PC-9 (cell line): ENCODE measurements at regions of chr1 and their contacts with region 1.

Region 1: DNA sequence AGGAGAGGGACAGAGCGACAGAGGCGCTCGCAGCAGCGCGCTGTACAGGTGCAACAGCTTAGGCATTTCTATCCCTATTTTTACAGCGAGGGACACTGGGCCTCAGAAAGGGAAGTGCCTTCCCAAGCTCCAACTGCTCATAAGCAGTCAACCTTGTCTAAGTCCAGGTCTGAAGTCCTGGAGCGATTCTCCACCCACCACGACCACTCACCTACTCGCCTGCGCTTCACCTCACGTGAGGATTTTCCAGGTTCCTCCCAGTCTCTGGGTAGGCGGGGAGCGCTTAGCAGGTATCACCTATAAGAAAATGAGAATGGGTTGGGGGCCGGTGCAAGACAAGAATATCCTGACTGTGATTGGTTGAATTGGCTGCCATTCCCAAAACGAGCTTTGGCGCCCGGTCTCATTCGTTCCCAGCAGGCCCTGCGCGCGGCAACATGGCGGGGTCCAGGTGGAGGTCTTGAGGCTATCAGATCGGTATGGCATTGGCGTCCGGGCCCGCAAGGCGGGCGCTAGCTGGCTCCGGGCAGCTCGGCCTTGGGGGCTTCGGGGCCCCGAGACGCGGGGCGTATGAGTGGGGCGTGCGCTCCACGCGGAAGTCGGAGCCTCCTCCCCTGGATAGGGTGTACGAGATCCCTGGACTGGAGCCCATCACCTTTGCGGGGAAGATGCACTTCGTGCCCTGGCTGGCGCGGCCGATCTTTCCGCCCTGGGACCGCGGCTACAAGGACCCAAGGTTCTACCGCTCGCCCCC is at the starts of genes CYB5RL and MRPL37:
- DNase-seq: peak; percentile 93 to 94
- H3K4me3 ChIP-seq: peak within 1 kb of the TSS; percentile 98
- H3K27ac ChIP-seq: no peak within 1 kb of the TSS
- H3K4me1 ChIP-seq: peaks cover 18% of the 10 kb centered on the region
- H3K27me3 ChIP-seq: no peaks in the 10 kb centered on the region
- CTCF ChIP-seq: no peak
- total RNA-seq, gene CYB5RL: 6.5 and 6.7 TPM in 2 replicates
- total RNA-seq, gene MRPL37: 180 and 198 TPM in 2 replicates

Region 2: GRCh38 chr1:53498555-53499142 is 701.3 kb before region 1 on chr1:
- CTCF ChIA-PET with region 1: no interaction called
- POLR2A ChIA-PET with region 1: no interaction called
- intact Hi-C with region 1: no loop called
- DNase-seq: no peak
- H3K4me3 ChIP-seq: no peak overlapping the region
- H3K27ac ChIP-seq: no peak overlapping the region
- H3K4me1 ChIP-seq: no peaks in the 10 kb centered on the region
- H3K27me3 ChIP-seq: peaks cover 17% of the 10 kb centered on the region
- CTCF ChIP-seq: no peak

Region 3: DNA sequence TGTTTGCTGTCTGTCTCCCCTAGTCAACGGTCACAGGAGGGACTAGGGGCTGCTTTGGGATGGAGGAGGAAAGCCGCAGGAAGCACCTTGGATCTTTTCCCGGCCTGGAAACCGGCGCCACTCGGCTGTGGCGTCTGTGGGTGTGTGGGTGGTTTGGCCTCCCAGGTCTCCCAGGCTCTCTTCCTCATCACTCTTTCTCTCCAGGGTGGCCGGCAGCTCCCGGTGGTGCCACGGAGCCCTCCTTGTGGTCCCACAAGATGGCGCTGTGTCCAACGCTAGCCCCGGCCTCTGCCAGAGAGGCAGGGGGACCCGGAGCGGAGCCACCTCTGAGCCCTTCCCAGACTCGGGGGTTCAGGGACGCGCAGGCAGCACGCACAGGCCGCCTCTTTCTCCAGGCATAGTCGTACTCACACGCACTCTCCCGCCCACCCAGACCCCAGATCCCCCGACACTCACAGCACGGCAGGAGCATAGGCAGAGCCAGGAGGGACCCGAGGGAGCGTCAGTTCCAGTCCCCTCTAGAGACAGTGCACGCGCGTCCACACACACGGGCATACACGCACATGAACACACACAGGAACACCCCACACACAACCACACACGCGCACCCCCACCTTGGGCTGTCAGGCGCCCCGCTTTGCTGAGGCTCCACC is 78.3 kb before region 1 on chr1:
- CTCF ChIA-PET with region 1: interaction called, 3 read pairs
- POLR2A ChIA-PET with region 1: no interaction called
- intact Hi-C with region 1: loop called (anchors 1 kb)
- DNase-seq: peak in 1 of 2 experiments; percentile 85
- H3K4me3 ChIP-seq: no peak overlapping the region
- H3K27ac ChIP-seq: no peak overlapping the region
- H3K4me1 ChIP-seq: no peaks in the 10 kb centered on the region
- H3K27me3 ChIP-seq: peaks cover 12% of the 10 kb centered on the region; the same call in 1 of the 2 replicates
- CTCF ChIP-seq: peak; percentile 73

Region 4: GRCh38 chr1:54663725-54664124 is 463.8 kb after region 1 on chr1:
- CTCF ChIA-PET with region 1: no interaction called
- POLR2A ChIA-PET with region 1: interaction called, 11 read pairs
- intact Hi-C with region 1: no loop called
- DNase-seq: no peak
- H3K4me3 ChIP-seq: no peak overlapping the region
- H3K27ac ChIP-seq: no peak overlapping the region
- H3K4me1 ChIP-seq: no peaks in the 10 kb centered on the region
- H3K27me3 ChIP-seq: no peaks in the 10 kb centered on the region
- CTCF ChIP-seq: no peak